ENCODE measurements at regions of chr3 and their contacts with region 1.

Region 1: GRCh38 chr3:156816800-156817645 is 9.1 kb upstream of the LEKR1 start:
- DNase-seq: peak; percentile 68 to 90 (median 81)
- ATAC-seq: peak; percentile 89
- H3K4me3 ChIP-seq: peak overlapping the region; percentile 64
- H3K4me3 Mint-ChIP-seq: peak overlapping the region; percentile 87 to 97 (median 95)
- H3K27ac ChIP-seq: peak overlapping the region; percentile 67
- H3K27ac Mint-ChIP-seq: peak overlapping the region; percentile 90 to 99 (median 96)
- H3K4me1 ChIP-seq: peaks cover 8 to 10% of the 10 kb centered on the region in 2 donors
- H3K4me1 Mint-ChIP-seq: peaks cover 6 to 72% (median 29%) of the 10 kb centered on the region in 7 donors
- H3K27me3 ChIP-seq: no peaks in the 10 kb centered on the region
- H3K27me3 Mint-ChIP-seq: no peaks in the 10 kb centered on the region

Region 2: DNA sequence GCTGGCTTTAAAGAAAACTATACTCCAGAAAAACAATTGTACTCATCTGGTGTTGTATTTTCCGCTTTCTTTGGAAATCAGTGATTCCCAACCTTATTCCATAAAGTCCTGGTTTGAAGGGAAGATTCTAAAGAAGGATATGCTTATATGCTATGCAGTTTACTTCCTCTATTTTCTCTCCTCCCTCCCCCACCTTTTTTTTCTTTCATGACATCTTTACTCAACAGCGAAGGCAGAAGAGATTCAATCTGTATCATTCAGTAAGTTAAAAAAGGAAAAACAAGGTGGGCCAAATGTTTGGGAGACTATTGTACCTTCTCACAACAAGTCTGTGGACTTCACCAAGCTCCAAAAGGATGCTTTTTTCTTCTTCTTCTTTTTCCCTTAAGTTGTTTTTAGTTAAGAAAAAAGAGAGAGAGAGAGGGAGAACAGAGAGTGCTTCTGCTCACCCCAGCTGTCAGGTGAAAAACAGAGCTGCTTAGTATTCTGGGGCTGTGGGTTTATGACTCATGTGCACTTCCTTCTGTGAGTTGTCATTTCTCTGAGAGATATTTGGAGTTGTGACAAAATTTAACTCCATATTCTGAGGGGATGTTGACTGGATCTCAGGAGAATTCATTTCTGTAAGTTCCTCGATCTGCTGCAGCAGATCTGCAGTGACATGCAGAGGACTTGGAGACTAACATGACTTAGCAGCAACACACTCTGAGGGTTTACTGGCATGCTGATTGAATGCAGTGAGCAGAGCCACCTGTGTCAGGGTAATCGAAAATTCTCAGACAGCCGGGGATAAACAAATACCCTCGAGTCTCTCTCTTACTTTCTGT is 332.8 kb before region 1 on chr3:
- CTCF ChIA-PET with region 1: interaction called, 3 read pairs
- POLR2A ChIA-PET with region 1: no interaction called
- intact Hi-C with region 1: loop called (anchors 2 to 5 kb)
- DNase-seq: peak in 8 of 9 donors; percentile 35 to 68 (median 62)
- ATAC-seq: peak; percentile 88
- H3K4me3 ChIP-seq: peak overlapping the region; percentile 47
- H3K4me3 Mint-ChIP-seq: peak overlapping the region; percentile 52 to 85 (median 74)
- H3K27ac ChIP-seq: peak overlapping the region; percentile 63
- H3K27ac Mint-ChIP-seq: peak overlapping the region; percentile 76 to 95 (median 83)
- H3K4me1 ChIP-seq: peaks cover 21 to 25% of the 10 kb centered on the region in 2 donors
- H3K4me1 Mint-ChIP-seq: peaks cover 14 to 40% (median 35%) of the 10 kb centered on the region in 7 donors
- H3K27me3 ChIP-seq: no peaks in the 10 kb centered on the region
- H3K27me3 Mint-ChIP-seq: peaks cover 0 to 17% (median 0%) of the 10 kb centered on the region in 5 donors

Region 3: GRCh38 chr3:156705761-156706631 is 111.0 kb before region 1 on chr3:
- CTCF ChIA-PET with region 1: no interaction called
- POLR2A ChIA-PET with region 1: no interaction called
- intact Hi-C with region 1: loop called in 1 of 2 experiments (anchors 5 kb)
- DNase-seq: no peak
- ATAC-seq: peak; percentile 57
- H3K4me3 ChIP-seq: no peak overlapping the region
- H3K4me3 Mint-ChIP-seq: no peak overlapping the region
- H3K27ac ChIP-seq: no peak overlapping the region
- H3K27ac Mint-ChIP-seq: no peak overlapping the region
- H3K4me1 ChIP-seq: no peaks in the 10 kb centered on the region
- H3K4me1 Mint-ChIP-seq: peaks cover 0 to 55% (median 7%) of the 10 kb centered on the region in 7 donors
- H3K27me3 ChIP-seq: no peaks in the 10 kb centered on the region
- H3K27me3 Mint-ChIP-seq: no peaks in the 10 kb centered on the region

Region 4: GRCh38 chr3:157067114-157067513 is 250.1 kb after region 1 on chr3:
- CTCF ChIA-PET with region 1: no interaction called
- POLR2A ChIA-PET with region 1: interaction called, 4 read pairs
- intact Hi-C with region 1: loop called in 1 of 2 experiments (anchors 5 kb)
- DNase-seq: peak in 4 of 9 donors; percentile 4 to 54 (median 38)
- ATAC-seq: peak; percentile 73
- H3K4me3 ChIP-seq: no peak overlapping the region
- H3K4me3 Mint-ChIP-seq: peak overlapping the region in 7 of 10 donors; percentile 1 to 67 (median 48)
- H3K27ac ChIP-seq: no peak overlapping the region
- H3K27ac Mint-ChIP-seq: peak overlapping the region in 8 of 9 donors; percentile 43 to 90 (median 66)
- H3K4me1 ChIP-seq: peaks cover 7 to 30% of the 10 kb centered on the region in 2 donors
- H3K4me1 Mint-ChIP-seq: peaks cover 10 to 37% (median 19%) of the 10 kb centered on the region in 7 donors
- H3K27me3 ChIP-seq: no peaks in the 10 kb centered on the region
- H3K27me3 Mint-ChIP-seq: peaks cover 0 to 9% (median 0%) of the 10 kb centered on the region in 5 donors

Region 5: DNA sequence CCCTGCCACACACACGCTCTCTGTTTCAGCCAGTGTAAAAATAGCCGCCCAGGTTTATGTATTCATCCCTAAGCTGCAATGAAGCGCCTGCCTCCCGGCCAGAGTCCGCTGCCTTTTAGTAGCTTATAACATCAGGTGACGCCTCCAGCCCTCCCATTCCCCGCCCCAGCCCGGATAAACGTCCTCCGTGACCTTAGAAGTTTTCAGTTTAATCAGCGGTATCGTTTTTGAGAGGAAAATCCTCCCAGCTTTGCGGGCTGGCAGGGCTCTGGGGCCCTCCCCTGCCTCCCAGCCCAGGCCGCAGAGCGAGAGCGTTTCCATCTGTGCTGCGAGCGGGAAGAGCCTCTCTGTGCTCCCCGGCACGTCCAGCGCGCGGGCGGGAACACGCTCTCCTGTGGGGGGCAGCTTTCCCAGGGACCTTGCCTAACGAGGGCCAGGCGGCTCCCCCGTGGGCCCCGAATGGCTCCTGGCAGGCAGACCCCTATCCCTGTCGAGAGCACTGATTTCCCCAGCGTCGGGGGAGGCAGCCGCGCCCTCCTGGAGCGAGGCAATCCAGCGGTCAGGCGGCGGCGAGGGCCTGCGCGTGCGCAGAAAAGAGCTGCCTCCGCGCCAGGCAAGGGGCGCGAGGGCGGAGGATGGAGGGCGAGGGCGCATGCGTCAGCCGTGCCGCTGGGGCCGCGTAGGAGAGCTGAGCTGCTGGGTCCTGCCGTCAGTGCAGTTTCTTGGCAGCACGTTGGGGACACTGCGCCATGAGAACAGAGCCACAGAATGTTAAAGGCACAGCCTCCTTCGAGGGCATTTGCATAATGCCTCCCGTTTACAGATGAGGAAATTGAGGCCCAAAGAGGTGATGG is 271.8 kb after region 1 on chr3:
- CTCF ChIA-PET with region 1: no interaction called
- POLR2A ChIA-PET with region 1: interaction called, 5 read pairs
- intact Hi-C with region 1: loop called (anchors 1 kb)
- DNase-seq: peak; percentile 90 to 97 (median 93)
- ATAC-seq: peak; percentile 95
- H3K4me3 ChIP-seq: peak overlapping the region; percentile 84
- H3K4me3 Mint-ChIP-seq: peak overlapping the region; percentile 81 to 89 (median 87)
- H3K27ac ChIP-seq: peak overlapping the region; percentile 83
- H3K27ac Mint-ChIP-seq: peak overlapping the region; percentile 92 to 98 (median 96)
- H3K4me1 ChIP-seq: peaks cover 11 to 30% of the 10 kb centered on the region in 2 donors
- H3K4me1 Mint-ChIP-seq: peaks cover 11 to 79% (median 23%) of the 10 kb centered on the region in 7 donors
- H3K27me3 ChIP-seq: no peaks in the 10 kb centered on the region
- H3K27me3 Mint-ChIP-seq: peaks cover 0 to 6% (median 0%) of the 10 kb centered on the region in 5 donors